ENCODE measurements at regions of chr9 and their contacts with region 1.

Region 1: DNA sequence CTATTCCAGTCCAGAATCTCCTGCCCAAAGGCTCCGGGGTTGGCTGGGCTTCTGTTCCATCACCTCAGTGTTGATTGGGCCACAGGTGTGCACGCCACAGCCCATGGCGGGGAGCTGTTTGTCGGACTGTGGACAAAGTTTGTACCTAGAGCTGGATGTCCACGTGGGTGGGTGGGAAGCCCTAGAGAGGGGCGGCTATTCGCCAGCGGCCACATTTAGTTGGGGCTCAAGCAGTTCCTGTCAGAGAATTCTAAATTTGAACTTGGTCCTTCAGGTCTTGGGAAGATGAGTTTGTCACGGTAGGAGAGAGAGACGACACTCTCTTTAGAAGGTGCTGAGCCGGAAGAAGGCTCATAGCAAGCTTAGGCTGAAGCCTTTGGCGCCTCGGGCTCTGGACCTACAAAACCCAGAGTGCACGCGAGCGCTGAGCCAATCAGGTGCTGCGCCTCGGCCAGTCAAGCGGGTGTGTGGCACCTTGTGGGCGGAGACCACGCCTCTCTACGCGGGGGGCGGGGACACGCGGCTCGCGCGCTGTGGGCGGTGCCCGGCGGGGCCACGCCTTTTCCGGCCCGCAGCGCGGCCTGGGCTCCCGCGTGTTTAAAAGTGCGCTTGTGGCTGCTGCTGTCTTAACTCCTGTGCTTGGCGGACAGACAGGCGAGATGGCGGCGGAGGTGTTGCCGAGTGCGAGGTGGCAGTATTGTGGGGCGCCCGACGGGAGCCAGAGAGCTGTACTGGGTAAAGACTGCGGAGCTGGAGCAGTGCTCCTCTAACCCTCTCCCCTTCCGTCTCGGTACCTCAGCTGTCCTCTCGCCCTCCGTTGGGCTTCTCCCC is at the start of gene POLR1E:
- DNase-seq: peak; percentile 89
- ATAC-seq: peak; percentile 91
- H3K4me3 ChIP-seq: peak within 1 kb of the TSS; percentile 77
- H3K27ac ChIP-seq: peak within 1 kb of the TSS; percentile 76
- H3K4me1 ChIP-seq: peaks cover 11% of the 10 kb centered on the region
- H3K27me3 ChIP-seq: peaks cover 4% of the 10 kb centered on the region; the same call in 1 of the 2 replicates
- CTCF ChIP-seq: no peak
- POLR2A ChIP-seq: peak; percentile 95
- RAD21 ChIP-seq: no peak
- total RNA-seq, gene POLR1E: 67.5 and 71.9 TPM in 2 replicates

Region 2: GRCh38 chr9:37415011-37415719 is 70.4 kb before region 1 on chr9:
- CTCF ChIA-PET with region 1: interaction called, 4 read pairs
- POLR2A ChIA-PET with region 1: no interaction called
- dilution Hi-C with region 1: no loop called
- in situ Hi-C with region 1: no loop called
- intact Hi-C with region 1: loop called (anchors 2 kb)
- DNase-seq: peak; percentile 73
- ATAC-seq: peak; percentile 85
- H3K4me3 ChIP-seq: no peak overlapping the region
- H3K27ac ChIP-seq: peak overlapping the region; percentile 2; the same call in 1 of the 2 replicates
- H3K4me1 ChIP-seq: peaks cover 2% of the 10 kb centered on the region; the same call in 1 of the 2 replicates
- H3K27me3 ChIP-seq: no peaks in the 10 kb centered on the region
- CTCF ChIP-seq: peak; percentile 76
- POLR2A ChIP-seq: no peak
- RAD21 ChIP-seq: peak; percentile 57

Region 3: GRCh38 chr9:37430841-37431597 is 54.6 kb before region 1 on chr9:
- CTCF ChIA-PET with region 1: no interaction called
- POLR2A ChIA-PET with region 1: no interaction called
- dilution Hi-C with region 1: no loop called
- in situ Hi-C with region 1: no loop called
- intact Hi-C with region 1: no loop called
- DNase-seq: no peak
- ATAC-seq: peak; percentile 51
- H3K4me3 ChIP-seq: no peak overlapping the region
- H3K27ac ChIP-seq: no peak overlapping the region
- H3K4me1 ChIP-seq: peaks cover 4% of the 10 kb centered on the region; the same call in 1 of the 2 replicates
- H3K27me3 ChIP-seq: no peaks in the 10 kb centered on the region
- CTCF ChIP-seq: no peak
- POLR2A ChIP-seq: no peak
- RAD21 ChIP-seq: no peak

Region 4: DNA sequence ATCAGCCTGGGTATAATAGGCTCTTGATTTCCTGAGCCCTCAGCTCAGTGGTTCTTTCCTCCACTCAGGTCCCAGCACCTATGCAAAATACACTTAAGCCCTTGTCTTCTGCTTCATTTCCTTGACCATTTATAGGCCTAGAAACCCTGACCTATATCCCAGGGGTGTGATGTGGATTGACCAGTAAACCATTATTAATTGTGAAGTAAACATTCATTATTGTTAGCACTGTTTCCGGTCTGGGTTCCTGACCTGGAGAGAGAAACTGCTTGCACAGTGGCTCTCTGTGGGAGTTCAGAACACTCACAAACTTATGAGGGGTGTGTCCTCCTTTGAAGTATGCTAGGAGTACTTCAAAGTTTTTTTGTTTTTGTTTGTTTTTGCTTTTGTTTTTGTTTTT is 126.4 kb after region 1 on chr9:
- CTCF ChIA-PET with region 1: no interaction called
- POLR2A ChIA-PET with region 1: no interaction called
- dilution Hi-C with region 1: no loop called
- in situ Hi-C with region 1: no loop called
- intact Hi-C with region 1: no loop called
- DNase-seq: no peak
- ATAC-seq: no peak
- H3K4me3 ChIP-seq: no peak overlapping the region
- H3K27ac ChIP-seq: no peak overlapping the region
- H3K4me1 ChIP-seq: no peaks in the 10 kb centered on the region
- H3K27me3 ChIP-seq: peaks cover 12% of the 10 kb centered on the region
- CTCF ChIP-seq: no peak
- POLR2A ChIP-seq: no peak
- RAD21 ChIP-seq: no peak

Region 5: DNA sequence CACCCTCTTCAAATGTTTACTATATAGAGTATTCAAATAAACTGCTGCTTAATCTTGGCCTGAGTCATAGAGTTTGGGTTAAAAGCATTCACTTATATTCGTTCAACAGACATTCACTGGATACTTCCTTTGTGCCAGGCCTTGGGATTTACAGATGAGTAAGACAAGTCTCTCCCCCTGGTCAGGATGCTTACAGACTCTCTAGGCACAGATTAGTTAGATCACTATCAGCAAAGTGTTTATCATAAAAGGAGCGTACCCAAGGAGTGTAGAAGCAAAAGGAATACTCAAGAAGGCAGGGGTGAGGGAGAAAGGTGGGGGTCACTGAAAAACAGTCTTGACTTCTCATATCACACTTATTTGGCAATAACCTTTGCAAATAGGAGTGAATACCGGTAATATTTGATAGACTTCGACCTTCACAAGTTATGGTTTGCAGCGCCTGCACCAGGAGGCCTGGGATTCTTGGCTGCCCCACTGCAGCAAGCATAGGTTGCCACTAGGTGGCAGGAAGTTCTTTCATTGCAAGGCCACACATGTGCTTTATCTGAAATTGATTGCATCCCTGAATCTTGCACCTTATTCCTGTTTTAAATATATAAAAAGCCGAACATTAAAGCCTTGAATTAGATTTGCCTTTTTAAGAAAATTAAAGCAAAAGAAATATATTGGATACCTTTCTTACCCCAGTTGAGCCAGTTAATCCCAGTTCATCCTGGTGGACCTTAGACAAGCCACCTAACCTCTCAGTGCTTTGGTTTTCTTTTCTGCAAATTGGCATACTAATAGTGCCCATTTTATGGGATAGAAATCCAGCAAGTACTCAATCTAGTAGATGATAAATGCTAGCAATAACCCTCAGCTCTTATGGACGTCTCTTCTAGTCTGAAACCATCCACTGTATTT is 261.5 kb after region 1 on chr9:
- CTCF ChIA-PET with region 1: no interaction called
- POLR2A ChIA-PET with region 1: no interaction called
- dilution Hi-C with region 1: no loop called
- in situ Hi-C with region 1: no loop called
- intact Hi-C with region 1: loop called (anchors 1 kb)
- DNase-seq: peak; percentile 86
- ATAC-seq: peak; percentile 93
- H3K4me3 ChIP-seq: no peak overlapping the region
- H3K27ac ChIP-seq: no peak overlapping the region
- H3K4me1 ChIP-seq: peaks cover 8% of the 10 kb centered on the region
- H3K27me3 ChIP-seq: peaks cover 21% of the 10 kb centered on the region
- CTCF ChIP-seq: peak; percentile 79
- POLR2A ChIP-seq: no peak
- RAD21 ChIP-seq: peak; percentile 81

Region 6: DNA sequence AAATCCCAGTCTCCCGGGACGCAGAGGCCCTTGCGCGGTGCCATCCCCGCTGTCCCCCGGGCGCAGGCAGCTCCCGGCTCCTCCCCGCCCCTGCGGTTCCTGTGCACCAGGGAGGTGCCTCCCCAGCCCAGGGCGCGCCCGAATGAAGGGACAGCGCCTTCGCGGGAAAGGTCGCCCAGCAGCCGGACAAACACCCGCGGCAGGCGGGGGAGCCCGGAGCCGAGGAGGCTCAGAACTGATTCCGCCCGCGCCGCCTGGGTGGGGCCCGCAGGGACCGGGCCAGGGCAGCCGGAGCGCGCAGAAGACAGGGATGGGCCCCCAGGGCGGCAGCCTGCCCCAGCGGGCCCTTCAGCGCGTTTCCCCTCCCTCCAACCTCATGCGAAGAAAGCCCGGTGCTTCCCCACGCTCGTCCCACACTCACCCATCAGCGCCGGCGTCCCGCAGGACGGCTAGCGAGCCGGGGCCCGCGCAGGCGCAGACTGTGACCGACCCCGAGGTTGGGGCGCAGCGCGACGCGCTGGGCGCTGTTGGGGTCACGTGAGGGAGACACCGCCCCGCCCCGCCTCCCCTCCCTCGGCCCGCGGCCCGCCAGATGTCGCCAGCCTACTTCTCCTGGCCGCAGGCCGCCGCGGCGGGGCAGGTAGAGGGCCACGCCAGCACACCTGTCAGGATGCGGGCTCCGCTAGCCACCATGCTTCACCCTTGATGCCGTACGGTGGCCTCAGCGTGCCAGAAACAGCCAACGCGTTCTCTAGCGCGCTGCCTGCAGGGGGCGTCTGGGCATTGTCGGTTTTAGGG is 418.2 kb after region 1 on chr9 and contains the start of gene SLC25A51:
- CTCF ChIA-PET with region 1: interaction called, 6 read pairs
- POLR2A ChIA-PET with region 1: no interaction called
- dilution Hi-C with region 1: no loop called
- in situ Hi-C with region 1: no loop called
- intact Hi-C with region 1: loop called (anchors 5 kb)
- DNase-seq: peak; percentile 88
- ATAC-seq: peak; percentile 85
- H3K4me3 ChIP-seq: peak within 1 kb of the TSS; percentile 78
- H3K27ac ChIP-seq: peak within 1 kb of the TSS; percentile 79
- H3K4me1 ChIP-seq: peaks cover 12% of the 10 kb centered on the region
- H3K27me3 ChIP-seq: no peaks in the 10 kb centered on the region
- CTCF ChIP-seq: peak; percentile 98
- POLR2A ChIP-seq: no peak; the same call in 1 of the 2 replicates
- RAD21 ChIP-seq: peak; percentile 72
- total RNA-seq, gene SLC25A51: 63.0 and 81.6 TPM in 2 replicates

Region 7: DNA sequence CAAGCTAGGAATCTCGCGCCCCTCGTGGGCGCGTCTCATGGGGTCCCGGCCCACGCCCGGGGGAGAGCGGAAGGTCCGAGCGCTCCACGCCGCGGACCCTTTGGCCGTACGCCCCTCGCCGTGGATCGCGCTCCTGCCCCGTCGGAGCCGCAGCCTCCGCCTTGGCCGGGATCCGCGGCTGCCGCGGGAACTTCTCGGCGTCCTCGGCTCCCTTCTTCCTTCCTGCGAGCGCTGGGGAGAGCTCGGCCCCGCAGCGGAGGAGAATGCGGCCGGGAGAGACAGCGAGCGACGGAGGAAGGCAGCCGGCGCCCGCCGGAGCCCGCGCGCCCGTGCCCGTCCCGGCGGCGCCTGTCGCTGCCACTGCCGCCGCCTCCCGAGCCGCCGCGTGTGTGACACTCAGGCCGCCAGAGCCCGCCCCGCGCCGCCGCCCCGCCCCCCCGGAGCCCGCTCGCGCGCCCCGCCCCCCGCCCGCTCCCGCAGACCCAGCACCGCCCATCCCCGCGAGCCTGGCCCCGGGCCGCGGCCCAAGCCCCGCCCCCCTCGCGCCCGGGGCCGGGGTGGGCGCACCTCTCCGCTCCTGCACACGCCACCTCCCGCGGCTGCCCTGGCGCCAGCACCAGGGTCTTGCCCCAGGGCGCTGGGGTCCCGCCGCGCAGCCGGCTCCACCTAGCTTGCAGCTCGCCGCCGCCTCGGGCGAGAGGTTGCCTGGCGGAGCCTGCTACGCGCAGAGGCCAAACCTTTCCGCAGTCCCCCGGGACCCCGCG is 583.4 kb after region 1 on chr9 and contains the start of gene SHB:
- CTCF ChIA-PET with region 1: no interaction called
- POLR2A ChIA-PET with region 1: no interaction called
- dilution Hi-C with region 1: no loop called
- in situ Hi-C with region 1: loop called (anchors 25 kb)
- intact Hi-C with region 1: no loop called
- DNase-seq: peak; percentile 33
- ATAC-seq: peak; percentile 71
- H3K4me3 ChIP-seq: peak within 1 kb of the TSS; percentile 89
- H3K27ac ChIP-seq: peak within 1 kb of the TSS; percentile 95
- H3K4me1 ChIP-seq: peaks cover 19% of the 10 kb centered on the region
- H3K27me3 ChIP-seq: no peaks in the 10 kb centered on the region
- CTCF ChIP-seq: no peak
- POLR2A ChIP-seq: peak; percentile 96
- RAD21 ChIP-seq: no peak
- total RNA-seq, gene SHB: 6.1 and 7.8 TPM in 2 replicates

Region 8: GRCh38 chr9:38362852-38363593 is 877.4 kb after region 1 on chr9:
- CTCF ChIA-PET with region 1: no interaction called
- POLR2A ChIA-PET with region 1: no interaction called
- dilution Hi-C with region 1: no loop called
- in situ Hi-C with region 1: loop called (anchors 25 kb)
- intact Hi-C with region 1: loop called (anchors 2 kb)
- DNase-seq: peak; percentile 85
- ATAC-seq: peak; percentile 84
- H3K4me3 ChIP-seq: no peak overlapping the region
- H3K27ac ChIP-seq: no peak overlapping the region
- H3K4me1 ChIP-seq: peaks cover 3% of the 10 kb centered on the region
- H3K27me3 ChIP-seq: peaks cover 7% of the 10 kb centered on the region
- CTCF ChIP-seq: peak; percentile 80
- POLR2A ChIP-seq: 0 out of 2 replicates have a peak, but pooled peaks have one; percentile 28
- RAD21 ChIP-seq: peak; percentile 80